ENCODE measurements at regions of chr1 and their contacts with region 1.

Region 1: GRCh38 chr1:47179017-47179987 is 10.5 kb downstream of the PDZK1IP1 start:
- DNase-seq: peak; percentile 85 to 99 (median 86)
- ATAC-seq: peak; percentile 61
- H3K4me3 ChIP-seq: peak overlapping the region; percentile 31
- H3K27ac ChIP-seq: peak overlapping the region; percentile 91
- H3K4me1 ChIP-seq: peaks cover 46 to 56% of the 10 kb centered on the region in 2 experiments
- H3K27me3 ChIP-seq: no peaks in the 10 kb centered on the region; a peak in 1 of 5 replicates
- CTCF ChIP-seq: peak; percentile 96 to 99 (median 99)
- EP300 ChIP-seq: peak; percentile 54; the same call in 1 of the 2 replicates
- POLR2A ChIP-seq: peak; percentile 45; the same call in 1 of the 2 replicates
- RAD21 ChIP-seq: peak; percentile 96 to 98

Region 2: GRCh38 chr1:47192458-47193384 is 13.4 kb after region 1 on chr1:
- CTCF ChIA-PET with region 1: no interaction called
- POLR2A ChIA-PET with region 1: interaction called, 65 read pairs
- in situ Hi-C with region 1: no loop called
- intact Hi-C with region 1: loop called (anchors 2 kb)
- DNase-seq: peak; percentile 88 to 95 (median 90)
- ATAC-seq: peak; percentile 88
- H3K4me3 ChIP-seq: no peak overlapping the region
- H3K27ac ChIP-seq: peak overlapping the region; percentile 2; the same call in 2 of the 3 replicates
- H3K4me1 ChIP-seq: peaks cover 49 to 61% of the 10 kb centered on the region in 2 experiments
- H3K27me3 ChIP-seq: no peaks in the 10 kb centered on the region
- CTCF ChIP-seq: peak; percentile 96 to 100 (median 98)
- EP300 ChIP-seq: peak; percentile 51; the same call in 1 of the 2 replicates
- POLR2A ChIP-seq: no peak
- RAD21 ChIP-seq: peak; percentile 98

Region 3: GRCh38 chr1:47241114-47242113 is 62.1 kb after region 1 on chr1:
- CTCF ChIA-PET with region 1: no interaction called
- POLR2A ChIA-PET with region 1: interaction called, 4 read pairs
- in situ Hi-C with region 1: no loop called
- intact Hi-C with region 1: loop called (anchors 1 kb)
- DNase-seq: peak; percentile 58 to 78 (median 66)
- ATAC-seq: peak; percentile 40
- H3K4me3 ChIP-seq: no peak overlapping the region
- H3K27ac ChIP-seq: peak overlapping the region; percentile 78
- H3K4me1 ChIP-seq: peaks cover 45 to 65% of the 10 kb centered on the region in 2 experiments
- H3K27me3 ChIP-seq: no peaks in the 10 kb centered on the region
- CTCF ChIP-seq: no peak
- EP300 ChIP-seq: 0 out of 2 replicates have a peak, but pooled peaks have one; percentile 34
- POLR2A ChIP-seq: peak; percentile 49; the same call in 1 of the 2 replicates
- RAD21 ChIP-seq: no peak

Region 4: GRCh38 chr1:47313915-47314664 is 134.8 kb after region 1 on chr1 and contains the start of gene STIL:
- CTCF ChIA-PET with region 1: no interaction called
- POLR2A ChIA-PET with region 1: interaction called, 5 read pairs
- in situ Hi-C with region 1: no loop called
- intact Hi-C with region 1: loop called (anchors 2 kb)
- DNase-seq: peak; percentile 100
- ATAC-seq: peak; percentile 96
- H3K4me3 ChIP-seq: peak within 1 kb of the TSS; percentile 71
- H3K27ac ChIP-seq: peak within 1 kb of the TSS; percentile 94
- H3K4me1 ChIP-seq: peaks cover 5 to 14% of the 10 kb centered on the region in 2 experiments; a peak in 4 of 5 replicates
- H3K27me3 ChIP-seq: no peaks in the 10 kb centered on the region
- CTCF ChIP-seq: peak in 1 of 3 experiments; percentile 15; a peak in 1 of 6 replicates
- EP300 ChIP-seq: peak; percentile 50; the same call in 1 of the 2 replicates
- POLR2A ChIP-seq: peak; percentile 97
- RAD21 ChIP-seq: no peak
- polyA plus RNA-seq, gene STIL: 10.5 to 17.5 TPM

Region 5: GRCh38 chr1:47388891-47389238 is 209.6 kb after region 1 on chr1:
- CTCF ChIA-PET with region 1: no interaction called
- POLR2A ChIA-PET with region 1: no interaction called
- in situ Hi-C with region 1: no loop called
- intact Hi-C with region 1: loop called (anchors 5 kb)
- DNase-seq: peak; percentile 78 to 82 (median 80)
- ATAC-seq: peak; percentile 93
- H3K4me3 ChIP-seq: no peak overlapping the region
- H3K27ac ChIP-seq: no peak overlapping the region
- H3K4me1 ChIP-seq: no peaks in the 10 kb centered on the region; a peak in 1 of 5 replicates
- H3K27me3 ChIP-seq: peaks cover 7 to 8% of the 10 kb centered on the region in 2 experiments; a peak in 4 of 5 replicates
- CTCF ChIP-seq: peak; percentile 92 to 96 (median 94)
- EP300 ChIP-seq: no peak
- POLR2A ChIP-seq: no peak
- RAD21 ChIP-seq: peak; percentile 62 to 90

Region 6: GRCh38 chr1:47437447-47438164 is 258.3 kb after region 1 on chr1 and contains the start of gene FOXD2:
- CTCF ChIA-PET with region 1: interaction called, 5 read pairs
- POLR2A ChIA-PET with region 1: interaction called, 6 read pairs
- in situ Hi-C with region 1: no loop called
- intact Hi-C with region 1: loop called (anchors 2 kb)
- DNase-seq: peak; percentile 95 to 98 (median 97)
- ATAC-seq: peak; percentile 93
- H3K4me3 ChIP-seq: peak within 1 kb of the TSS; percentile 70
- H3K27ac ChIP-seq: peak within 1 kb of the TSS; percentile 90
- H3K4me1 ChIP-seq: peaks cover 3 to 53% of the 10 kb centered on the region in 2 experiments; a peak in 4 of 5 replicates
- H3K27me3 ChIP-seq: peaks cover 21 to 24% of the 10 kb centered on the region in 2 experiments; a peak in 4 of 5 replicates
- CTCF ChIP-seq: peak; percentile 91 to 94 (median 92)
- EP300 ChIP-seq: no peak
- POLR2A ChIP-seq: no peak; the same call in none of the 2 replicates
- RAD21 ChIP-seq: peak; percentile 56 to 66
- polyA plus RNA-seq, gene FOXD2: 0.06 to 0.07 TPM

Measured in K562 (cell line).